Activated CD4-positive, alpha-beta T cell treated with anti-CD3 and anti-CD28 coated beads for 36 hours (primary cell): ENCODE measurements at regions of chr9 and their contacts with region 1.

Region 1: DNA sequence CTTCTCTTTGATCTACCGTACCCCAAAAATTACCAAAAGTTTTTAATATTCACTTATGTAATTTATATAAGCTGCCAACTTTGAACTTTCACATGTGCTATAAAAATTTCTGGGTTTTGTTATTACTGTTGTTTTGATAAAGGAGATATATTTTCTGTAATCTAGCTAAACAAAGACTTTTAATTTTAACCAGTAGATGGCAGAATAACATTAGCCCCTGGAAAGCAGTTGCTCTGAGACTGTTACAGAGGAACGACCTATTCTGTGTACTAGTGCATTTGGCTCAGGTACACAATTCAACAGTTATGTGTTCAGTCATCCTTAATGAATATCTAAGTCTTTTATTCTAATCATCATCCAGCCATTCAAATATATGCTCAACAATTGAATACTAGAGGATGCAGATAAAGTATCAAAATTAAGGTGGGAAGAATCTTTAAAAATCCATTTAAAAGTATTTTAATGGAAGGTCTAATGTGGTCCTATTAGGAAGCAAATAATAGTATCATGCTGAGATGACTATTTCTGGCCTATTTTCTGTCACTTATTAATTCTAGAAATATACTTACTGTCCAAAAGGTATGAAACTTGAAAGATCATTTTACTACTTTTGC is 8.6 kb downstream of the KLHL9 start:
- DNase-seq: no peak
- ATAC-seq: peak; percentile 84
- H3K4me3 Mint-ChIP-seq: no peak overlapping the region
- H3K27ac Mint-ChIP-seq: no peak overlapping the region
- H3K4me1 Mint-ChIP-seq: peaks cover 44% of the 10 kb centered on the region
- H3K27me3 Mint-ChIP-seq: no peaks in the 10 kb centered on the region

Region 2: GRCh38 chr9:21016701-21017491 is 309.7 kb before region 1 on chr9:
- CTCF ChIA-PET with region 1: no interaction called
- POLR2A ChIA-PET with region 1: no interaction called
- intact Hi-C with region 1: no loop called
- DNase-seq: no peak
- ATAC-seq: no peak
- H3K4me3 Mint-ChIP-seq: no peak overlapping the region
- H3K27ac Mint-ChIP-seq: no peak overlapping the region
- H3K4me1 Mint-ChIP-seq: no peaks in the 10 kb centered on the region
- H3K27me3 Mint-ChIP-seq: no peaks in the 10 kb centered on the region

Region 3: DNA sequence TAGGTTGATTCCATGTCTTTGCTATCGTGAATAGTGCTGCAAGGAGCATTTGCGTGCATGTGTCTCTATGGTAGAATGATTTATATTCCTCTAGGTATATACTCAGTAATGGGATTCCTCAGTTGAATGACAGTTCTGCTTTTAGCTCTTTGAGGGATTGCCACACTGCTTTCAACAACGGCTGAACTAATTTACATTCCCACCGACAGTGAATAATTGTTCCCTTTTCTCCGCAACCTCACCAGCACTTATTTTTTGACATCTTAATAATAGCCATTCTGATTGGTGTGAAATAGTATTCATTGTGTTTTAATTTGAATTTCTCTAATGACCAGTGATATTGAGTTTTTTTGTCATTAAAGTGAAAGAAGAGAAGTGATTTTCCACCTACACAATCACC is 40.0 kb before region 1 on chr9:
- CTCF ChIA-PET with region 1: no interaction called
- POLR2A ChIA-PET with region 1: no interaction called
- intact Hi-C with region 1: no loop called
- DNase-seq: no peak
- ATAC-seq: no peak
- H3K4me3 Mint-ChIP-seq: no peak overlapping the region
- H3K27ac Mint-ChIP-seq: no peak overlapping the region
- H3K4me1 Mint-ChIP-seq: no peaks in the 10 kb centered on the region
- H3K27me3 Mint-ChIP-seq: peaks cover 24% of the 10 kb centered on the region

Region 4: GRCh38 chr9:21357479-21358460 is 31.1 kb after region 1 on chr9:
- CTCF ChIA-PET with region 1: interaction called, 6 read pairs
- POLR2A ChIA-PET with region 1: no interaction called
- intact Hi-C with region 1: loop called in 1 of 2 experiments (anchors 2 kb)
- DNase-seq: peak; percentile 40
- ATAC-seq: peak; percentile 94
- H3K4me3 Mint-ChIP-seq: peak overlapping the region; percentile 35
- H3K27ac Mint-ChIP-seq: peak overlapping the region; percentile 70
- H3K4me1 Mint-ChIP-seq: peaks cover 19% of the 10 kb centered on the region
- H3K27me3 Mint-ChIP-seq: peaks cover 18% of the 10 kb centered on the region

Region 5: DNA sequence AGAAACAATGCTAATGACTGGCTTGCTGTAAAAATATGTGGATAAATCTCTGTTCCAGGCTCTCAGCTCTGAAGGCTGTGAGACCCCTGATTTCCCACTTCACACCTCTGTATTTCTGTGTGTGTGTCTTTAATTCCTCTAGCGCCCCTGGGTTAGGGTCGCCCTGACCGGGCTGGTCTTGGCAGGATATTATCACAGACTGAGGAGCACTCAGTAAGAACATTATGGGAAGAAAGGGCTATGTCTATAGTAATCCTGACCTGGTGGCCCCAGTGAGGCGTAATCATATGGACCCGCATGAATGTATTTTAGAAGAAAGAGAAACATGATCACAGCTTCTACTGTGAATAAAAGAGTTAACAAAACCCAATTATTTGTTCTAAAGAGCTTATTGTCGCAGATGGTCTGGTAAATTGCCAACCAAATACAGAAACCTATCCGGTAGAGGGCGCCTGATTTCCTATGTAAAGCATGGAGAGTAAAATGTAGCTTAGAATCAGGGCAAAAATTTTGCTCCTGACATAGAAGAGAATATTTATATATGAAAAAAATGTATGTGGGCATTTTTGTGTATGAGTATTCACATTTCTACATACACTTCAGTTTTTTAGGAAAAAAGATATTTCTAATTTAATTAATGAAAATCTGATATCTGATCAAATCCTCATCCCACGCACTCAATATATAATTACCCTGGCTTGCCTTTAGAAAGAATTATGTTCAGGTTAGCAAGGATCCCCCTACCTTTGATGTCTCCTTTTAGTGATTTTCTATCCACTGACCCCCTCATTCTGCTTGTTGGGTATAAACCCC is 107.8 kb after region 1 on chr9:
- CTCF ChIA-PET with region 1: interaction called, 25 read pairs
- POLR2A ChIA-PET with region 1: no interaction called
- intact Hi-C with region 1: no loop called
- DNase-seq: peak; percentile 64
- ATAC-seq: no peak
- H3K4me3 Mint-ChIP-seq: no peak overlapping the region
- H3K27ac Mint-ChIP-seq: no peak overlapping the region
- H3K4me1 Mint-ChIP-seq: no peaks in the 10 kb centered on the region
- H3K27me3 Mint-ChIP-seq: peaks cover 19% of the 10 kb centered on the region

Region 6: GRCh38 chr9:21465859-21466518 is 139.4 kb after region 1 on chr9:
- CTCF ChIA-PET with region 1: interaction called, 10 read pairs
- POLR2A ChIA-PET with region 1: interaction called, 7 read pairs
- intact Hi-C with region 1: no loop called
- DNase-seq: no peak
- ATAC-seq: peak; percentile 78
- H3K4me3 Mint-ChIP-seq: no peak overlapping the region
- H3K27ac Mint-ChIP-seq: no peak overlapping the region
- H3K4me1 Mint-ChIP-seq: no peaks in the 10 kb centered on the region
- H3K27me3 Mint-ChIP-seq: peaks cover 2% of the 10 kb centered on the region

Region 7: GRCh38 chr9:21709464-21710058 is 382.9 kb after region 1 on chr9:
- CTCF ChIA-PET with region 1: no interaction called
- POLR2A ChIA-PET with region 1: no interaction called
- intact Hi-C with region 1: loop called in 1 of 2 experiments (anchors 5 kb)
- DNase-seq: peak; percentile 79
- ATAC-seq: peak; percentile 53
- H3K4me3 Mint-ChIP-seq: no peak overlapping the region
- H3K27ac Mint-ChIP-seq: no peak overlapping the region
- H3K4me1 Mint-ChIP-seq: peaks cover 19% of the 10 kb centered on the region
- H3K27me3 Mint-ChIP-seq: peaks cover 2% of the 10 kb centered on the region